ENCODE measurements at regions of chr2 and their contacts with region 1.

Region 1: GRCh38 chr2:112584134-112584890 is at the start of gene CHCHD5:
- DNase-seq: peak; percentile 96
- H3K4me3 Mint-ChIP-seq: peak within 1 kb of the TSS; percentile 98
- H3K27ac Mint-ChIP-seq: peak within 1 kb of the TSS; percentile 96
- H3K4me1 Mint-ChIP-seq: peaks cover 26% of the 10 kb centered on the region
- H3K27me3 Mint-ChIP-seq: no peaks in the 10 kb centered on the region
- total RNA-seq, gene CHCHD5: 40.3 to 43.5 TPM

Region 2: DNA sequence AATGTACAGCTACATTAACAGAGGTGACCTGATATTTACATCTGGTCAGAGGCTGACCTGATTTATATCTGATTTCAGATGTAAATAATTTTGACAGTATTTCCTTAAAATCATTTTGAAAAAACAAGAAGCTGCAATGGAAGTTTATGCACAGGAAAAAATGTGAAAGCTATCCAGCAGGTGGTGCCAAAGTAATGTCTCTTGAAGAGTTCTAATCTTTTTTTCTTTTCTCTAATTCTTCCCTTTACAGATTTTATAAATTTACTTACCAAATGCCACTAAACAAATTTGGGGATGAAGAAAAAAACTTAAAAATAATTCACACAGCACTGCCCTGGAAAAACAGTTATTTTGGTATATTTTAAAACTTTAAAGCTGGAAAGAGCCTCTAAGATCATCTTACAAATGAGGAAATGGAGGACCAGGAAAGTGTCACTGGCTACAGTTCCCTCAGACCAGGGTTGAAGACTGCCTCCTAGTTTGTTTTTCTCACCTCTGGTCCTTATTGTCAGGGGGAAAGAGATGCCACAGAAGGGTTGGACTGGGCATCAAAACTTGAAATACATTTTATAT is 462.5 kb before region 1 on chr2:
- CTCF ChIA-PET with region 1: no interaction called
- intact Hi-C with region 1: loop called (anchors 1 kb)
- DNase-seq: peak; percentile 75
- H3K4me3 Mint-ChIP-seq: no peak overlapping the region
- H3K27ac Mint-ChIP-seq: no peak overlapping the region
- H3K4me1 Mint-ChIP-seq: peaks cover 15% of the 10 kb centered on the region
- H3K27me3 Mint-ChIP-seq: no peaks in the 10 kb centered on the region

Region 3: DNA sequence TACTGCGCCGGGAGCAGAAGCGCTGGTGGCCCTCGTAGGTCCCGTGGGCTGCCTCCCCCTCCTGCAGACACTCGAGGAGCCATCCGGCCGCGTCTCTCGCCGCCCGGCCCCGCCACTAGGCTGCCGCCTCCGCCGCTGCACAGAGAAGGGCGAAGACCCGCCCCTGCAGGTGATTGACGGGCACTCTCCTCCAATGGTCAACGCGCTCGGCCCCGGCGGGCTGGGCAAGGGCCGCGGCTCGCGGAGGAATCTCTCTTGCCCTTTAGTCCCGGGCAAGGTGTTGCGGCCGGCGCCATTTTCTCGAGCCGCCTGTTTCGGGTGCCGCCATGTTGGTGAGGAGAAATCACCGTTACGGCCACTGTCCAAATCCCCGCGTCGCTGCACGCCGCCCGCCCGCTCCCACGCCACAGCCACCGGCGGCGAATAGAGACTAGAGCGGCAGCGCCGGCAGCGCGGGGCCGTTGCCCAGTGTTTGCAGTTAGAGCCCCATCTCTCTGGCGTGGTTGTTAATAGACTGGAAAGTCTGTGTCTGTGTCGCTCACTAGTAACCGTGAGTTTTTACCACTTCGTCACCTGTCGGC is 308.9 kb before region 1 on chr2 and contains the start of gene ZC3H6:
- CTCF ChIA-PET with region 1: no interaction called
- intact Hi-C with region 1: loop called (anchors 1 kb)
- DNase-seq: peak; percentile 99
- H3K4me3 Mint-ChIP-seq: peak within 1 kb of the TSS; percentile 93
- H3K27ac Mint-ChIP-seq: peak within 1 kb of the TSS; percentile 97
- H3K4me1 Mint-ChIP-seq: peaks cover 24% of the 10 kb centered on the region
- H3K27me3 Mint-ChIP-seq: no peaks in the 10 kb centered on the region
- total RNA-seq, gene ZC3H6: 18.5 to 18.7 TPM

Region 4: DNA sequence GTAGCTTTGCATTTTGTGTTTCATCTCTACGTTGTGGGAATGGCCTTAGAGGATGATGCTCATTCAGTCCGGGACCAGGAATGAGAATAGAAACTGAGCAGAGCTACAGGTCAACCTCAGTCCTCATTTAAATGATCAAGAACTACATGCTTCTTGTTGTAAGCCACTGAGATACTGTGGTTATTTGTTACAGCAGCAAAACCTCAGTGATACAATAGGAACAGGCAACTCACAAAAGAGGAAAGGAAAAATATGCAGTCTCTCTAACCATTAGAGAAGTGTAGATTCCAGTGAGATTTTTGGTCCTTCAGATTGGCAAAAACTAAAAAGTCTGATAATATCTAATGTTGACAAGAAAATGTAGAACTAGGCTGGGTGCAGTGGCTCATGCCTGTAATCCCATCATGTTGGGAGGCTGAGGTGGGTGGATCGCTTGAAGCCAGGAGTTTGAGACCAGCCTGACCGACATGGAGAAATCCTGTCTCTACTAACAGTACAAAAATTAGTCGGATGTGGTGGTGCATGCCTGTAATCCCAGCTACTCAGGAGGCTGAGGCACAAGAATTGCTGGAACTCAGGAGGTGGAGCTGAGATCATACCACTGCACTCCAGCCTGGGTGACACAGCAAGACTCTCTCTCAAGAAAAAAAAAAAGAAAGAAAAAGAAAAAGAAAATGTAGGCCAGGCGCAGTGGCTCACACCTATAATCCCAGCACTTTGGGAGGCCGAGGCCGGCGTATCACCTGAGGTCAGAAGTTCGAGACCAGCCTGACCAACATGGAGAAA is 13.4 kb after region 1 on chr2:
- CTCF ChIA-PET with region 1: interaction called, 23 read pairs
- intact Hi-C with region 1: no loop called
- DNase-seq: no peak
- H3K4me3 Mint-ChIP-seq: no peak overlapping the region
- H3K27ac Mint-ChIP-seq: no peak overlapping the region
- H3K4me1 Mint-ChIP-seq: peaks cover 4% of the 10 kb centered on the region
- H3K27me3 Mint-ChIP-seq: no peaks in the 10 kb centered on the region

Region 5: DNA sequence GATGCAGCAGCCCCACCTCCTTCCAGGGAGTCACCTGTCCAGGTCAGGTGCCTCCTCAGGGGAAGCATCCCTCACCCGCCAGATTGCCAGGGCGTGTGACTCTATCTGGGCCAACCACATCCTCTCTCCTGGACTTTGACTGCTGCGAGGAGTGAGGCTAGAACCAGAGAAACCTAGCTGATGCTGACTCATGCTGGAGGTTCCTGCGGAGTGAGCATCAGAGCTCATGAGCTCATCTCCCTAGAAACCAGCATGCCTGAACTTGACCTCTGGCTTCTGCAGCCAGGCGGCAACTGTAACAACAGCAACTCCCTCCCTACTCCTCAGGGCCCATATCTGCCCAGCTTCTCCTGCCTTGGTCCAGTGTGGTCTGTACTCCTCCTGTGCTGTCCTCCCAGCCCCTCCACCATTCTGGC is 108.2 kb after region 1 on chr2:
- CTCF ChIA-PET with region 1: interaction called, 4 read pairs
- intact Hi-C with region 1: loop called (anchors 1 kb)
- DNase-seq: peak; percentile 89
- H3K4me3 Mint-ChIP-seq: peak overlapping the region; percentile 4
- H3K27ac Mint-ChIP-seq: peak overlapping the region; percentile 80
- H3K4me1 Mint-ChIP-seq: peaks cover 29% of the 10 kb centered on the region
- H3K27me3 Mint-ChIP-seq: no peaks in the 10 kb centered on the region

Measured in activated naive CD4-positive, alpha-beta T cell treated with anti-CD3 and anti-CD28 coated beads for 36 hours (primary cell).